Naive thymus-derived CD4-positive, alpha-beta T cell (primary cell): ENCODE measurements at regions of chr11 and their contacts with region 1.

Region 1: DNA sequence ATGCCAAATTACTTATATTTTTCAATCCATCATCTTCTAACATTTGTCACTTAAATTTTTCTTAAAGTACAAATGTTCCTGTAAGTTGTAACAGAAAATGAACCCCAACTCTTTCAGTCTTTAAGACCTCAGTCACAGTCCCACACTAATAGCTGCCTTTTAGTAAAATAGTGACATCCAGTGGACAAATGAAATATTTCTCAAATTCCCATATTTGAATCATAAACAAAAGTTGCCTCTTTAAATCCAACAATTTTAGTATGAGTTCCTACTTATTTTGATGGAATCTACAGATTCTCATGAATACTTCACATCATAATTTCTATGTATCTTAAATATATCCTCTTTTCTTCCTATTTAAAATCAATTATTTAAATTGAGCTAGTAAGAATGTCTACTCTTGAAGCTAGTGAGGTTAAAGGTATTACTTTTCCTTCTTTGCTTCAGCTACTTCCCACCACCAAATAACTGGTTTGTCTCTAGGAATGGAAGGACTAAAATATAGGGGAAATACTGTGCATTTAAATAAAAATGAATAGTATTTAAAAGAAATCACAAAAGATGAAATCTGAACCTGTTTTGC is 9.2 kb downstream of the LIN7C start:
- DNase-seq: peak in 2 of 9 donors; percentile 13 to 22
- ATAC-seq: peak; percentile 46
- H3K4me3 ChIP-seq: no peak overlapping the region
- H3K4me3 Mint-ChIP-seq: peak overlapping the region in 1 of 10 donors; percentile 32
- H3K27ac ChIP-seq: no peak overlapping the region
- H3K27ac Mint-ChIP-seq: no peak overlapping the region
- H3K4me1 ChIP-seq: peaks cover 9 to 11% of the 10 kb centered on the region in 2 donors
- H3K4me1 Mint-ChIP-seq: peaks cover 12 to 42% (median 30%) of the 10 kb centered on the region in 7 donors
- H3K27me3 ChIP-seq: no peaks in the 10 kb centered on the region
- H3K27me3 Mint-ChIP-seq: no peaks in the 10 kb centered on the region

Region 2: DNA sequence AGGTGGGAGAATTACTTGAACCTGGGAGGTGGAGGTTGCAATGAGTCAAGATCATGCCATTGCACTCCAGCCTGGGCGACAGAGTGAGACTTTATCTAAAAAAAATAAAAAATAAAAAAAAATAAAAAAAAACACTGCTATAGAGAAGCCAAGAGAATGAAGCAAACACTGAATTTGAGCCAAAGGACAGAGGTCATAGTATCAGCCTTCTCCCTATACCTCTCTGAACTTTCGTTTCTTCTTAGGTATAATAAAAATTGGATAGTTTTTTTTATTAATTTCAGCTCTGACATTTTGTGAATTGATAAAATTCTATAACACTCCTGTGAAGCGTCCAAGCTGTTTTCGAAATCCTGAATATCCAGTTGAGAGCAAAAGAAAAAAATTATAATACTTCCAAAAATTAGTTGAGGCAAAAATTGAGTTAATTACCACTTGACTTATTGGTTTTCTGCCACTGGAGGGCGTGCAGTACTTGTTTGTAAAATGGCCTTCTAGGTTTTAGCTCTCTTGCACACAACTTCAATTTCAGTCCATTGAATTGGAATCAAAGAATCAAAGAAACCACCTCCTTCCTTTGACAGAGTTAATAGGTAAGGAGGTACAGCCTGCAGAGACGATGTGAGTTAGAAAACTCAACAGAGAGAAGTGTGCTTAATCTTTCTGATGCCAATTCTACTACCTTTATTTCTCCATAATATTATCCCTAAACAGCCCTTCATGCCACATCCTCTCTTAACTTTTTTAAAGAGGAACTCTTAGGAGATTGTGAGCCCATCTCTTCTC is 313.5 kb before region 1 on chr11:
- CTCF ChIA-PET with region 1: interaction called, 5 read pairs
- POLR2A ChIA-PET with region 1: no interaction called
- intact Hi-C with region 1: loop called (anchors 1 kb)
- DNase-seq: peak in 7 of 9 donors; percentile 14 to 45 (median 29)
- ATAC-seq: peak; percentile 46
- H3K4me3 ChIP-seq: no peak overlapping the region
- H3K4me3 Mint-ChIP-seq: no peak overlapping the region
- H3K27ac ChIP-seq: no peak overlapping the region
- H3K27ac Mint-ChIP-seq: no peak overlapping the region
- H3K4me1 ChIP-seq: no peaks in the 10 kb centered on the region
- H3K4me1 Mint-ChIP-seq: no peaks in the 10 kb centered on the region
- H3K27me3 ChIP-seq: no peaks in the 10 kb centered on the region
- H3K27me3 Mint-ChIP-seq: peaks cover 3 to 19% (median 16%) of the 10 kb centered on the region in 5 donors

Region 3: GRCh38 chr11:27754035-27755017 is 257.0 kb after region 1 on chr11:
- CTCF ChIA-PET with region 1: no interaction called
- POLR2A ChIA-PET with region 1: no interaction called
- intact Hi-C with region 1: no loop called
- DNase-seq: no peak
- ATAC-seq: no peak
- H3K4me3 ChIP-seq: no peak overlapping the region
- H3K4me3 Mint-ChIP-seq: no peak overlapping the region
- H3K27ac ChIP-seq: no peak overlapping the region
- H3K27ac Mint-ChIP-seq: no peak overlapping the region
- H3K4me1 ChIP-seq: no peaks in the 10 kb centered on the region
- H3K4me1 Mint-ChIP-seq: no peaks in the 10 kb centered on the region
- H3K27me3 ChIP-seq: no peaks in the 10 kb centered on the region
- H3K27me3 Mint-ChIP-seq: peaks cover 0 to 6% (median 0%) of the 10 kb centered on the region in 5 donors